Ascending aorta (tissue), 2 donors: ENCODE measurements at regions of chr19 and their contacts with region 1.

Region 1: GRCh38 chr19:7680606-7681339 is at the start of gene TRAPPC5:
- DNase-seq: peak; percentile 42 to 91
- H3K4me3 ChIP-seq: peak within 1 kb of the TSS; percentile 98 to 99
- H3K27ac ChIP-seq: peak within 1 kb of the TSS; percentile 77 to 81
- H3K4me1 ChIP-seq: peaks cover 4 to 11% of the 10 kb centered on the region in 2 donors
- H3K27me3 ChIP-seq: no peaks in the 10 kb centered on the region
- CTCF ChIP-seq: peak; percentile 55 to 97 (median 73)
- total RNA-seq, gene TRAPPC5: 166 TPM

Region 2: DNA sequence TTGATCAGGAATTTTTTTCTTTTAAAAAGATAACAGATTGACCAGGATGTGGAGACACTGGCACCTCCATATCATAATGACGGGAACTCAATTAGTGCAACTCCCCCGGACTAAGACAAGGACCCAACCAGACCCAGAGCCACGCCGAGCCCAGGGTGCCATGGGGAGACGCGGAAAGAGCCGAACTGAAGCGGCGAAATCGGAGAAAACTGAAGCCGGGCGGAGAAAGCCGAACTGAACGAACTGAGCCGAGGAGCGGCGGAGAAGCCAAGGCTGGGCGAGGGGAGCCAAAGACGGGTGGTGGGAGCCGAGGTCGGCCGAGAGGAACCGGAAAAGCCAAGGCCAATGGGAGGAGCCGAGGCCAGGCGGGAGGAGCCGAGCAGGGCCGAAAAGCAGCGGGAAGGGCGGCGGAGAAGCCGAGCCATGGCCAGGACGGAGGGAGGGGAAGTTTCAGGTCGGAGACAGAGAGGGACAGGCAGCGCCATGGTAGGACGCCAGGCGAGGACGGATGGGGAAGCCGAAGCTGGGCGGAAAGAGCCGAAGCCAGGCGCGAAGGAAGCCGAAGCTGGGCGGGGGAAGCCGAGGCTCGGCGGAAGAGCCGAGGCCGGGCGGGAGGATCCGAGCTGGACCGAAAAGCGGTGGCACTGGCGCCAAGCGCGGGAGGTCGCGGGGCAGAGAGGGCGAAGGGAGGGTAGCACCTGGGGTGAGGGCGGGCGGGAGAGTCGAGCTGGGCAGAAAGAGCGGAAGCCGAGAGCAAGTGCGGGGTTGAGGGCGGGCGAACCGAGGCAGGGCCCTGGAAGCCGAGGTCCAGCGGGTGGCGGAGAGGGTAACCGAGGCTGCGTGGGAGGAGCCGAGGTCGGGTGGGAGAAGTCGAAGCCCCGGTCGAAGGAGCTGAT is 581.8 kb before region 1 on chr19:
- intact Hi-C with region 1: loop called (anchors 2 kb)
- DNase-seq: peak; percentile 59 to 92
- H3K4me3 ChIP-seq: peak overlapping the region; percentile 67 to 70
- H3K27ac ChIP-seq: peak overlapping the region; percentile 89 to 91
- H3K4me1 ChIP-seq: peaks cover 0 to 2% of the 10 kb centered on the region in 2 donors
- H3K27me3 ChIP-seq: no peaks in the 10 kb centered on the region
- CTCF ChIP-seq: no peak

Region 3: DNA sequence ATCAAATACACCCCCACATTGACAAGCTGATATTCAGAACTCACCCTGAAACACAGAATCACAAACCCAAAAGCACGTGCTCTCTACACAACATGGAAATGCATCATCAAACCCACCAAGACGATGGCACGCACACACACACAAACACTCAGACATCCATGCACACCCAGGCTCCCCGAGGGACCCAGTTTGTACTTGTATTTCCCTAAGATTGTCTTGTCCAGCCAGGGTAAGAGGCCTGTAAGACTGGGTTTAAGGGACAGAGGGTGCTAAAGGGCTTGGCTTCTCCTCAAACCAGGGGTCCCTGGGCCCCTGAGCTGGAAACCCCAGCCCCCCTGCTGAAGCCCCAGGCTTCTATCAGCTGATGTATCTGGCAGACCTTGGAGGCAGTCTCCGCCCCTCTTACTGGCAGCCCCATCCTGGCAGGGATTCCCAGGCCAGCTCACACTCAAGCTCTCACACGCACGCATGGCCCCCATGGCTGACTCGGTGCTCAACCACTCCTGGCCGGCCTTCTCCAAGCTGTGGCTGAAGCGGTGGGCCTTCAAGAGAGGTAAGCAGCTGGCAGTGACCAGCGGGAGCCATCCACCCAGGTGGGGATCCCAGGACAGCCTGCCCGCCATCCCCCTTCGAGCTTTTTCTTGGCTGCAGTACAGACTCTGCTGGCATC is 325.5 kb before region 1 on chr19:
- intact Hi-C with region 1: loop called (anchors 2 kb)
- DNase-seq: no peak
- H3K4me3 ChIP-seq: no peak overlapping the region
- H3K27ac ChIP-seq: no peak overlapping the region
- H3K4me1 ChIP-seq: no peaks in the 10 kb centered on the region
- H3K27me3 ChIP-seq: no peaks in the 10 kb centered on the region
- CTCF ChIP-seq: no peak

Region 4: GRCh38 chr19:7515645-7516151 is 165.1 kb before region 1 on chr19 and contains the start of gene ZNF358:
- intact Hi-C with region 1: no loop called
- DNase-seq: peak in 1 of 2 donors; percentile 88
- H3K4me3 ChIP-seq: peak within 1 kb of the TSS; percentile 70 to 97
- H3K27ac ChIP-seq: peak within 1 kb of the TSS; percentile 90 to 96
- H3K4me1 ChIP-seq: peaks cover 6 to 23% of the 10 kb centered on the region in 2 donors
- H3K27me3 ChIP-seq: no peaks in the 10 kb centered on the region
- CTCF ChIP-seq: no peak
- total RNA-seq, gene ZNF358: 163 TPM

Region 5: DNA sequence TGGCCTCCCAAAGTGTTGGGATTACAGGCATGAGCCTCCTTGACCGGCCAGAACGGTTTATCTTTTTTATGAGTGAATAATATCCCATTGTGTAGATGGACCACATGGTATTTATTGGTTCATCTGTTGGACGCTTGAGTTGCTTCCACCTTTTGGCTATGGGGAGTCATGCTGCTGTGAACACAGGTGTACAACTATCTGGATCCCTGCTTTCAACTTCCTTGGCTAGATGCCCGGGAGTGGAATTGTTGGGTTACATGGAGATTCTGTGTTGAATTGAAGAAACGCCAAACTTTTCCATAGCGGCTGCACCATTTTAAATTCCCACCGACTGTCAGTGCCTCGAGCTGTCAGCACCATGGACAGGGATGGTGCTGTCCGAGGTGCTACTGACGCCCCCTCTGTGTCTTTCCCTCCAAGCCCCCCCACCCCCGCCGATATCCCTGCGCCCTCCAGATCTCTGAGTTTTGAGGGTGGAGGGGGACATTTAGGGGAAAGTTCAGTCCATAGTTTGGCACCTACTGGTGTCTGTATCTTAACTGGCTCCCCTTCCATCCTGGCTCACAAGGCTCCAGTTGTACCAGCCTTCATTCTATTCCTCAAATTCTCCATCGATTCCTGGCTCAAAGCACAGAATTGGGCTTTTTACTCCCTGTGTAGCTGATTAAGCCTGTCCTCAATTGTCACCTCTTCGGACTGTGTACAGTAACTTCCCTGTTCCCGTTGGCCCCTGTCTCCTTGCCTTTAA is 118.0 kb before region 1 on chr19:
- intact Hi-C with region 1: loop called (anchors 2 kb)
- DNase-seq: no peak
- H3K4me3 ChIP-seq: no peak overlapping the region
- H3K27ac ChIP-seq: no peak overlapping the region
- H3K4me1 ChIP-seq: no peaks in the 10 kb centered on the region
- H3K27me3 ChIP-seq: no peaks in the 10 kb centered on the region
- CTCF ChIP-seq: no peak

Region 6: DNA sequence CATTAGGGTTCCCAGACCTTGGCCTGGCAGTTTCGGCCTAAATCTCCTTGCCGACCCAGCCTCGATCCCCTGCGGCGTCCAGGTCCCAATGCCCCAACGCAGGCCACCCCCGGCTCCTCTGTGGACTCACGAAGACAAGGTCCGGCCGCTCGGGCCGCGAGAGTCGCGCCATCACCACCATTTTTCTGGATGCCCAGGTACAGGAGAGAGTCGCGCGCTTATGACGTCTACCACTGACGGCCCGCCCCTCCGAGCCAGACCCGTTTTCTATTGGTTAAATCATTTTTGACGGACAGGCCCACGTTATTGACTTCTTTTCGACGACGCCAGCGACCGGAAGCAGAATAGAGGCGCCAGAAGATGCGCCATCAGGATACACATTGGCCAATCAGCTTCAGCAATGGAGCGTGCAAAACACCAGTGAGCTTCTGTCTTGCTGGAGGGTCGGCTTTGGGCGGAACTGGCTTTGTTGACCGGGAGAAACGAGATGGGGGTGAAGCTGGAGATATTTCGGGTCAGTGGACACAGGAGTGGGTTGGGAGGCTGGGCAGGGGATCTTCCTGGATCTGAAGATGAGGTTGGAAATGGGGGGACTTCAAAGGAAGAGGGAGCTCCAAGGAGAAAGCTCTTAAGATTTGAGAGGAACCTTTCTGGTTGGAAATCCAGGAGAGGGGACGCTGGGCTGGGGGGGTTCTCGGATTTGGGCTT is 51.3 kb before region 1 on chr19 and contains the starts of genes PET100 and XAB2:
- intact Hi-C with region 1: loop called (anchors 1 kb)
- DNase-seq: peak; percentile 95 to 99
- H3K4me3 ChIP-seq: peak within 1 kb of the TSS; percentile 94 to 96
- H3K27ac ChIP-seq: peak within 1 kb of the TSS; percentile 79 to 88
- H3K4me1 ChIP-seq: peaks cover 7 to 27% of the 10 kb centered on the region in 2 donors
- H3K27me3 ChIP-seq: no peaks in the 10 kb centered on the region
- CTCF ChIP-seq: no peak
- total RNA-seq, gene PET100: not detected
- total RNA-seq, gene XAB2: 18.4 TPM

Region 7: GRCh38 chr19:7652061-7652641 is 28.6 kb before region 1 on chr19:
- intact Hi-C with region 1: loop called (anchors 1 kb)
- DNase-seq: peak in 1 of 2 donors; percentile 87
- H3K4me3 ChIP-seq: no peak overlapping the region
- H3K27ac ChIP-seq: no peak overlapping the region
- H3K4me1 ChIP-seq: peaks cover 0 to 4% of the 10 kb centered on the region in 2 donors
- H3K27me3 ChIP-seq: no peaks in the 10 kb centered on the region
- CTCF ChIP-seq: peak; percentile 93 to 98 (median 94)

Region 8: DNA sequence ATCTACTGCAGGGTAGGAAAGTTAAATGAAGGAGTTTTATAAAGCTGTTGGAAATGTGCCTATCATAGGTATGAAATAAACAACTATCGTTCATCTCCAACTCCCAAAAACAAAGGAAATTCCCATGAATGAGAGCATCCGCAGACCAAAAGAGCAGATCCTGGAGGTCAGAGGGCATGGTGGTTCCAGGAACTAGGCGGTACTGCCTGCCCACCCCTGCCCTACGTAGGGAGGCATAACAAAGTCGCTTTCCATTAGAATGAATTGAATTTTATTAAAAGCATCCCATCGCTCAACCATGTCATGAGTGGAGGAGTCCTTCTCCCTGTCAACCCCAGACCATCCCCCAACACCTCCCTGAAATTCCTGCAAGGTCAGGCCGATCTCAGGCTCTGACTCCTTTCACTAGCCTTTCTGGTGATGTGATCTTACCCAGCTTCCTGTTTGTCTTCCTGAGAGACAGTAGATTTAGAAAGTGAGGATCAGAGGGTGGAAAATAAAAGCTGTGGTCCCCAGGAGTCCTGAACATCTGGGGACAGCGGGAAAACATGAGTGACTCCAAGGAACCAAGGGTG is 82.0 kb after region 1 on chr19 and contains the start of gene CLEC4M:
- intact Hi-C with region 1: no loop called
- DNase-seq: no peak
- H3K4me3 ChIP-seq: no peak within 1 kb of the TSS
- H3K27ac ChIP-seq: no peak within 1 kb of the TSS
- H3K4me1 ChIP-seq: no peaks in the 10 kb centered on the region
- H3K27me3 ChIP-seq: no peaks in the 10 kb centered on the region
- CTCF ChIP-seq: no peak
- total RNA-seq, gene CLEC4M: not detected